ENCODE measurements at regions of chr19 and their contacts with region 1.

Region 1: DNA sequence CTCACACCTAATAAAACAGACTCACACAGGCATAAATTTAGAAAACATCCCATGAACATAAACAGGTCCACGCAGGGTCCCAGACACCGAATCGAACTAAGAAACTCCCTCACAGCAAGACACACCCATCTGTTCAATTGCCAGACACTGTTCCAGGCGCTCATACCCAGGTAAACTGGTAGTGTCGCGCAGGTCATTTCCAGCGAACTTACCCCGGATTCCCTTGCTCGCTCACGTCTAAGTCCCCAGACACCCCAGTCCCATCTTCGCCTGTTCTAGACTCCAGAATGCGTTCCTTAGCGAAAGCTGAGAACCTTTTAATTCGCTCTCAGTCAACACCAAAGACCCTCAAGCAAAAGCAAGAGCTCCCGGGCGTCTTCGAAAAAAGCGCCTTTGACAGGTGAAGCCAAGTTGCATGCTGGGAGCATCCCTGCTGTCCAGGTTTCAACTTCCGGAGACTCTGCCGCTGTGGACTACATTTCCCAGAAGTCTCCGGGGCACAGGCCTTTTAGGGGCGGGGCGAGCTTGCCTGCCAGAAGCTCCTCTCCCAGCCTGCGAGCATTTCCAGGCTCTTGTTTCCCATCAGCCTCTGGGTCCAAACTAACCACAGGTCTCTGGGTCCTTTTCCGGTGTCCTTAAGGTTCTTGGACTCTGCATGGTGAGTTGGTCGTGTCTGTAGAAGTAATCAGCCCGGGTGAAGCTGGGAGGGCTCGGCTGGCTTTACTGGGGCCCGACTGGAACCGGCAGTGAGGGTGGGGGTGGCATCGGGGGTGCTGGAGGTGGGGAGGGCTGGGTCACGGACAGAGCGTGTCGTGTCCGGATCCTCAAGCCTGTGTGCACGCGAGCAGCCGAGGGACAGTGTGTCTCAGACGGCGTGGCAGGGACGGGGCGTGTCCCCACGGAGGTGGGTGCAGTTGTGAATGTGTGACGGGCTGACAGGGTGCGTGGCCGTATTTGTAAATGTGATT is at the start of gene ZNF283:
- DNase-seq: peak; percentile 60 to 78 (median 74)
- ATAC-seq: peak; percentile 99
- H3K4me3 ChIP-seq: peak within 1 kb of the TSS; percentile 77
- H3K4me3 Mint-ChIP-seq: peak within 1 kb of the TSS; percentile 76 to 93 (median 90)
- H3K27ac ChIP-seq: peak within 1 kb of the TSS; percentile 66
- H3K27ac Mint-ChIP-seq: peak within 1 kb of the TSS; percentile 49 to 86 (median 77)
- H3K4me1 ChIP-seq: peaks cover 4 to 12% of the 10 kb centered on the region in 2 donors
- H3K4me1 Mint-ChIP-seq: peaks cover 16 to 25% (median 21%) of the 10 kb centered on the region in 7 donors
- H3K27me3 ChIP-seq: no peaks in the 10 kb centered on the region
- H3K27me3 Mint-ChIP-seq: peaks cover 1 to 16% (median 9%) of the 10 kb centered on the region in 5 donors
- total RNA-seq, gene ZNF283: 4.3 to 24.4 (median 7.7) TPM

Region 2: GRCh38 chr19:42634409-42635232 is 1192.5 kb before region 1 on chr19:
- CTCF ChIA-PET with region 1: no interaction called
- POLR2A ChIA-PET with region 1: no interaction called
- intact Hi-C with region 1: no loop called
- DNase-seq: peak in 4 of 9 donors; percentile 1 to 47 (median 6)
- ATAC-seq: peak; percentile 58
- H3K4me3 ChIP-seq: no peak overlapping the region
- H3K4me3 Mint-ChIP-seq: no peak overlapping the region
- H3K27ac ChIP-seq: no peak overlapping the region
- H3K27ac Mint-ChIP-seq: no peak overlapping the region
- H3K4me1 ChIP-seq: no peaks in the 10 kb centered on the region
- H3K4me1 Mint-ChIP-seq: peaks cover 0 to 4% (median 0%) of the 10 kb centered on the region in 7 donors
- H3K27me3 ChIP-seq: no peaks in the 10 kb centered on the region
- H3K27me3 Mint-ChIP-seq: peaks cover 3 to 26% (median 18%) of the 10 kb centered on the region in 5 donors

Region 3: GRCh38 chr19:43619262-43620060 is 207.6 kb before region 1 on chr19 and contains the start of gene ZNF428:
- CTCF ChIA-PET with region 1: no interaction called
- POLR2A ChIA-PET with region 1: no interaction called
- intact Hi-C with region 1: loop called in 1 of 2 experiments (anchors 1 kb)
- DNase-seq: peak; percentile 77 to 91 (median 84)
- ATAC-seq: peak; percentile 93
- H3K4me3 ChIP-seq: peak within 1 kb of the TSS; percentile 63
- H3K4me3 Mint-ChIP-seq: peak within 1 kb of the TSS; percentile 95 to 99 (median 98)
- H3K27ac ChIP-seq: peak within 1 kb of the TSS; percentile 83
- H3K27ac Mint-ChIP-seq: peak within 1 kb of the TSS; percentile 93 to 99 (median 97)
- H3K4me1 ChIP-seq: peaks cover 9 to 12% of the 10 kb centered on the region in 2 donors
- H3K4me1 Mint-ChIP-seq: peaks cover 18 to 59% (median 36%) of the 10 kb centered on the region in 7 donors
- H3K27me3 ChIP-seq: no peaks in the 10 kb centered on the region
- H3K27me3 Mint-ChIP-seq: no peaks in the 10 kb centered on the region
- total RNA-seq, gene ZNF428: 21.7 to 29.1 (median 25.9) TPM

Region 4: GRCh38 chr19:43855616-43856015 is 28.5 kb after region 1 on chr19:
- CTCF ChIA-PET with region 1: no interaction called
- POLR2A ChIA-PET with region 1: no interaction called
- intact Hi-C with region 1: no loop called
- DNase-seq: no peak
- ATAC-seq: no peak
- H3K4me3 ChIP-seq: no peak overlapping the region
- H3K4me3 Mint-ChIP-seq: no peak overlapping the region
- H3K27ac ChIP-seq: no peak overlapping the region
- H3K27ac Mint-ChIP-seq: no peak overlapping the region
- H3K4me1 ChIP-seq: no peaks in the 10 kb centered on the region
- H3K4me1 Mint-ChIP-seq: no peaks in the 10 kb centered on the region
- H3K27me3 ChIP-seq: no peaks in the 10 kb centered on the region
- H3K27me3 Mint-ChIP-seq: no peaks in the 10 kb centered on the region

Region 5: DNA sequence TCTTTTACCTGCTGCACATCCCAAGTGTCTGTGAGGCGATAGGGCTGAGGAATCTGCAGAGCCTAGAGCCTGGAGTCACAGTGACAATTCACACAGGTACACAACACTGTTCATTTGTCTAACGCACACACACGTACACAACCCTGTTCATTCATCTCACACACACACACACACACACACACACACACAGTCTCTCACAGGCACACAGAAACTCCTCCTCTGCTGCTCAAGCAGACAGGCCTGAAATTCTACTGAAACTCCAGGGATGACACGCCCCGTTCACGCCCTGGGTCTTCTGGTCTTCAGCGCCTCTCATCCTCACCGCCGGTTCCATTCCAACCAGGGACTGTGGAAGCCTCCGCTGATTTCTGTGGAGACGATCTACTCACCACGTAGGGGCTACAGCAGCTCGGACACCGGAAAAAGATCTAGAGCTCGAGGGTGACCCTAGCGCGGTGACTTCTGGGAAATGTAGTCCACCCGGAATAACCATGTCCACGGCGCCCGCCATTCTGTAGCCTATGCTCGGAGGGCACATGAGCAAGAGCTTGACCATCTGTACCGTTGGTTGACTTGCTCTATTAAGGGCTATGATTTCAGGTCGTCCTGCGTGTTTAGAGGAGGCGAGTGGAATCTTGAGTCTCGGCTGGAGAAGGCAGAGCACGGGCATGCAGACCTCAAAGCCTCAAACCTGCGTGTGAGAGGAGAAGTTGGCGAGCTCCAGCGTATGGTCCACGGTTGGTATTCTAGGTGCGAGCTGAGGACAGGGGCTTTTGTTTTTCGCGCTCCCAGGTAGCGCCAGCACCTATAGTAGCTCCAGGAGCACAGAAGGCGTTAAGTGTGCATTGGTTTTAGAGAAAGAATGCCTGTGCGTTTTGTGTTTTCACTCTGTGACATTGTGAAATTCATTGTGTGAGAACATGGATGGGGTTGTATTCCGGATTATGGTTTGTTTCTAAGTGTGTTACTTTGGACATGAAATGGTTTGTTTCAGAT is 74.6 kb after region 1 on chr19:
- CTCF ChIA-PET with region 1: interaction called, 8 read pairs
- POLR2A ChIA-PET with region 1: no interaction called
- intact Hi-C with region 1: loop called (anchors 1 to 5 kb)
- DNase-seq: peak; percentile 21 to 56 (median 48)
- ATAC-seq: peak; percentile 87
- H3K4me3 ChIP-seq: peak overlapping the region; percentile 63
- H3K4me3 Mint-ChIP-seq: peak overlapping the region; percentile 89 to 97 (median 92)
- H3K27ac ChIP-seq: peak overlapping the region; percentile 27
- H3K27ac Mint-ChIP-seq: peak overlapping the region; percentile 66 to 86 (median 79)
- H3K4me1 ChIP-seq: peaks cover 0 to 7% of the 10 kb centered on the region in 2 donors
- H3K4me1 Mint-ChIP-seq: peaks cover 15 to 29% (median 21%) of the 10 kb centered on the region in 7 donors
- H3K27me3 ChIP-seq: no peaks in the 10 kb centered on the region
- H3K27me3 Mint-ChIP-seq: no peaks in the 10 kb centered on the region

Region 6: GRCh38 chr19:44025217-44025936 is 198.3 kb after region 1 on chr19 and contains the start of gene ZNF222:
- CTCF ChIA-PET with region 1: no interaction called
- POLR2A ChIA-PET with region 1: no interaction called
- intact Hi-C with region 1: loop called in 1 of 2 experiments (anchors 1 kb)
- DNase-seq: peak; percentile 41 to 78 (median 66)
- ATAC-seq: peak; percentile 99
- H3K4me3 ChIP-seq: peak within 1 kb of the TSS; percentile 76
- H3K4me3 Mint-ChIP-seq: peak within 1 kb of the TSS; percentile 95 to 100 (median 98)
- H3K27ac ChIP-seq: peak within 1 kb of the TSS; percentile 71
- H3K27ac Mint-ChIP-seq: peak within 1 kb of the TSS; percentile 84 to 98 (median 94)
- H3K4me1 ChIP-seq: peaks cover 5 to 9% of the 10 kb centered on the region in 2 donors
- H3K4me1 Mint-ChIP-seq: peaks cover 12 to 40% (median 31%) of the 10 kb centered on the region in 7 donors
- H3K27me3 ChIP-seq: no peaks in the 10 kb centered on the region
- H3K27me3 Mint-ChIP-seq: peaks cover 0 to 9% (median 3%) of the 10 kb centered on the region in 5 donors
- total RNA-seq, gene ZNF222: 2.9 to 10.1 (median 4.5) TPM

Region 7: GRCh38 chr19:44207126-44207803 is 380.2 kb after region 1 on chr19:
- CTCF ChIA-PET with region 1: no interaction called
- POLR2A ChIA-PET with region 1: no interaction called
- intact Hi-C with region 1: loop called in 1 of 2 experiments (anchors 10 kb)
- DNase-seq: peak; percentile 25 to 78 (median 70)
- ATAC-seq: peak; percentile 97
- H3K4me3 ChIP-seq: peak overlapping the region; percentile 79
- H3K4me3 Mint-ChIP-seq: peak overlapping the region; percentile 81 to 95 (median 87)
- H3K27ac ChIP-seq: peak overlapping the region; percentile 75
- H3K27ac Mint-ChIP-seq: peak overlapping the region; percentile 79 to 93 (median 84)
- H3K4me1 ChIP-seq: peaks cover 0 to 11% of the 10 kb centered on the region in 2 donors
- H3K4me1 Mint-ChIP-seq: peaks cover 7 to 15% (median 11%) of the 10 kb centered on the region in 7 donors
- H3K27me3 ChIP-seq: no peaks in the 10 kb centered on the region
- H3K27me3 Mint-ChIP-seq: peaks cover 0 to 22% (median 16%) of the 10 kb centered on the region in 5 donors

Region 8: GRCh38 chr19:44500148-44500956 is 673.3 kb after region 1 on chr19 and contains the start of gene ZNF180:
- CTCF ChIA-PET with region 1: no interaction called
- POLR2A ChIA-PET with region 1: no interaction called
- intact Hi-C with region 1: loop called in 1 of 2 experiments (anchors 1 kb)
- DNase-seq: peak; percentile 89 to 96 (median 93)
- ATAC-seq: peak; percentile 96
- H3K4me3 ChIP-seq: peak within 1 kb of the TSS; percentile 100
- H3K4me3 Mint-ChIP-seq: peak within 1 kb of the TSS; percentile 91 to 98 (median 96)
- H3K27ac ChIP-seq: peak within 1 kb of the TSS; percentile 84
- H3K27ac Mint-ChIP-seq: peak within 1 kb of the TSS; percentile 82 to 94 (median 92)
- H3K4me1 ChIP-seq: peaks cover 13 to 19% of the 10 kb centered on the region in 2 donors
- H3K4me1 Mint-ChIP-seq: peaks cover 29 to 45% (median 34%) of the 10 kb centered on the region in 7 donors
- H3K27me3 ChIP-seq: peaks cover 0 to 2% of the 10 kb centered on the region in 2 donors
- H3K27me3 Mint-ChIP-seq: peaks cover 7 to 18% (median 13%) of the 10 kb centered on the region in 5 donors
- total RNA-seq, gene ZNF180: 7.5 to 17.7 (median 10.6) TPM